WTC11 (cell line): ENCODE measurements at regions of chr4 and their contacts with region 1.

Region 1: DNA sequence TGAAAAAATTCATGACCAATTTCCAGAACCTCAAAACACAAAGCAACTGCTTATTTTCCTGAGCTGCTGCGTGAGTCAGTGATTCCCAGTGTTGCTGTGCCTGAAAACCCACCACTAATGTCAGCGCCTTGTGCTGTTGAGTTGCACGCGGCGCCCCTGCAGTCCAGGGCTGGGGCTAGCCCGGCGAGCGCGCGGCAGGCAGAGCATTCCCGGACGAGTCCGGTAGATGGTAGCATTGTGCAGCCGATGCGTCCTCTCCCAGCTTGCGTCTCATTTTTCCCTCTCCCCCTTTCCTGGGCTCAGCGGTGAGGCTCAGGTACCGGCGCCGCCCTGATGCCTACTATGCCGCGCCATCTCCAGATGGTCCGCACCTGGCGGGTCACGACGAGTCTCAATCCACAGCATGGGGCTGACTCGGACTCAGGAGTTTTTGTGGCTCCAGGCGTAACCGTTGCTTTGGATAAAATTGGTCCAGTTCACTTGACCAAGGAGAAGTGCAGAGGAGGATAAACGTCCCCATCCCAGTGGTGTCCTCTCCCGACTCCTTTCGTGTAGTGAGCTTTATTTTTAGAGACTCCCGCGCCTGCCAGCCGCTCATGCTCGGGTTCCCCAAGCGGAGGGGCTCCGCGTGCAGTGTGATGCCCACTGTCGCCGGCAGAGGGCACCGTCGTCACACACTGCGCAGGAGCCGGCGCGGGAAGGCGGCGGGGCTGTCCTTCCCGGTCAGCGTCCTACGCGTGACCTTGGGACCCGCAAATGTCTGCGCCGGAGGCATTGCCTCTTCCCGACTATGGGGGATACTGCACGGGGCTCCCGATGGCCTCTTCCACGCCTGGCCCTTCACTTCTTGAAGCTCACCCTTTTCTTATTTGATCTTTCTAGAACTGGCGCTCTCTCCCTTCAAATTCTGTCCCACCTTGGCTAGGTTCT is 53.6 kb upstream of the IGFBP7 start:
- DNase-seq: peak; percentile 88
- ATAC-seq: peak; percentile 90
- H3K4me3 Mint-ChIP-seq: peak overlapping the region; percentile 75
- H3K27ac Mint-ChIP-seq: no peak overlapping the region
- H3K4me1 Mint-ChIP-seq: peaks cover 29% of the 10 kb centered on the region
- H3K27me3 Mint-ChIP-seq: peaks cover 33% of the 10 kb centered on the region
- CTCF ChIP-seq: peak; percentile 90

Region 2: DNA sequence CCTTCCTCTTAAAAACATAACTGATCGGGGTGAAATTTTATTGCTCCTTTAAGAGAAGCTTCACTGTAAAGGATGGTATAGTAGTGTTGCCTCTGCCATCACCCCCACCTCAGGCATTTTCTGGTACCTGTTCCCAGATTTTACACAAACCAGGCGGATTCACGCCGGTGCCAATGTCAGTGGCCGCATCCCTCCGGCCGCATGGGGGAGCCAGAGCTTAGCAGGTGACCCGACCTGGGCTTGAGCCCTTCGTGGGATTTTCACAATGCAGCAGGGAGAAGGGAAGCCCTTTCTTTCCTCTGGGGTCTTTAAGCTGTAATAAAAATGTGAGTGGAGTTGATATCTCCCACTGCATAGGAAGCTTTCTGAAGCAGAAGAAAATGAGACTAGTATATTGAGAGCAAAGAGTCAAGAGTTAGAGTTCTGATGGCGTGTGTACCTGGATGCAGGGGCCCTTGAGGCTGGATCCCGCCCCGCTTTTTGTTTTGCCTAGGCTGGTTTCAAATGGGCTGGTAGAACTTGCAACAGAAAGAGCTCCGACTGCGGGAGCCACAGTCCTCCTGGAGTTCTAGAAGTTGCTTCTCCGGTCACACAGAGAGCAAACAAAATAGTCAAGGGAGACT is 125.7 kb before region 1 on chr4:
- CTCF ChIA-PET with region 1: interaction called, 40 read pairs
- POLR2A ChIA-PET with region 1: interaction called, 5 read pairs
- DNase-seq: peak; percentile 85
- ATAC-seq: peak; percentile 92
- H3K4me3 Mint-ChIP-seq: peak overlapping the region; percentile 52
- H3K27ac Mint-ChIP-seq: no peak overlapping the region
- H3K4me1 Mint-ChIP-seq: peaks cover 13% of the 10 kb centered on the region
- H3K27me3 Mint-ChIP-seq: no peaks in the 10 kb centered on the region; the same call in 1 of the 2 replicates
- CTCF ChIP-seq: peak; percentile 70; the same call in 1 of the 2 replicates

Region 3: GRCh38 chr4:57131849-57132742 is 31.7 kb before region 1 on chr4:
- CTCF ChIA-PET with region 1: interaction called, 10 read pairs
- POLR2A ChIA-PET with region 1: no interaction called
- DNase-seq: peak; percentile 24
- ATAC-seq: peak; percentile 92
- H3K4me3 Mint-ChIP-seq: no peak overlapping the region
- H3K27ac Mint-ChIP-seq: peak overlapping the region; percentile 25
- H3K4me1 Mint-ChIP-seq: peaks cover 15% of the 10 kb centered on the region
- H3K27me3 Mint-ChIP-seq: peaks cover 4% of the 10 kb centered on the region; the same call in 1 of the 2 replicates
- CTCF ChIP-seq: no peak

Region 4: DNA sequence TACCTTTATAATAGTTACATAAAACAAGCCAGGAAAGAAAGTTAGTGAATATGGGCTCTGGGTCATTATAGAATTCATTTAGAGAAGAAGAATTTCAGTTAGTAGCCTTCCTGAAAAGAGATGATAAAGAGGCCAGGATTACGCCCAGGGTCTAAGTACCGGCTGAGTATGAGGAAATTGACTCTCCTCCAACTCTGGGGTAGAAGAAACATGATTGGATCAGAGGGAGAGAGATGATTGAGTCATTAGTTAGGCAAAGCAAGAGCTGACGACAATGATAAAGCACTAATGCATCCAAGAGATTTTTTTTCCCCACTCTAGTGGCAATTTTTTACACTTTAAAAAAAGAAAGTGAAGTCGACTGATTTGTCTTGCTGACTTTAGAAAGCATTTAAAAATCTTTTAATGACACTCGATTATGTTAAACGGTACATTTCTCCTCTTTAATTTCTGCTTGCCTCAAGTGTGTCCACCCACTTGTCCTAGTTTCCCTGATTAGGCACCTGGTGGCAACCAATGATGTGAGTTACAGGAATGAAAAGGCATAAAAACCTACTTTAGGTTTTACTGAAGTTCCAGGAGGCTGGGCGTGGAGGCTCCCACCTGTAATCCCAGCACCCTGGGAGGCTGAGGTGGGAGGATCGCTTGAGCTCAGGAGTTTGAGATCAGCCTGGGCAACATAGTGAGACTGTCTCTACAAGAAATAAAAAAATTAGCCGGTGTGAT is 16.3 kb before region 1 on chr4:
- CTCF ChIA-PET with region 1: no interaction called
- POLR2A ChIA-PET with region 1: no interaction called
- DNase-seq: no peak
- ATAC-seq: no peak
- H3K4me3 Mint-ChIP-seq: no peak overlapping the region
- H3K27ac Mint-ChIP-seq: no peak overlapping the region
- H3K4me1 Mint-ChIP-seq: no peaks in the 10 kb centered on the region
- H3K27me3 Mint-ChIP-seq: peaks cover 10% of the 10 kb centered on the region; the same call in 1 of the 2 replicates
- CTCF ChIP-seq: no peak

Region 5: DNA sequence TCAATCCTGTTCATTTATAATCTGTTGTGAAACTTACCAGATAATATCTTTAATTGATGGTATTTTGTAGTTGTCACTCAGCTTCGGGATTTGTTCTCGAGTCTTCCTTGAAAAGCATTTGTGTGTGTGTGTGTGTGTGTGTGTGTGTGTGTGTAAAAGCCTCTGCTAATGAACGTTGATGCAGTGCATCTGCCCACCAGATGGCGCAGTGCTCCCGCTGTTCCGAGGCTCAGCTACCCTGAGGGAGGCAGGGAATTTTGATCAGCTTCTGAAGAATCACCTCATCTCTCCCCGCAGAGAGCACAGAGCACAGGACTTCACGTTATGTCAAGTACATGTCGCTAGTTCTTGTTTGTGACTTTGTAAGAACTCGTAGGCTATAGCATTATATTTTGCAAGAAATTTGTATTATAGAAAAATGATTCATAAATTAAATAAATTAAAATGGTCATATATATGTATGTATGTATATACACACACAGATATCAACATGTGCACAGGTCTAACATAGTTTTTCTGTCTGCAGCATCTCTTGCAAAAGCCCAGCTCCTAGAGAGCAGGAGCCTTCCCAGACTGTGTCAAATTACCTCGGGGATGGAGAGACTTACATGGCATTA is 263.1 kb after region 1 on chr4:
- CTCF ChIA-PET with region 1: interaction called, 35 read pairs
- POLR2A ChIA-PET with region 1: no interaction called
- DNase-seq: peak; percentile 81
- ATAC-seq: peak; percentile 94
- H3K4me3 Mint-ChIP-seq: no peak overlapping the region
- H3K27ac Mint-ChIP-seq: no peak overlapping the region
- H3K4me1 Mint-ChIP-seq: peaks cover 4% of the 10 kb centered on the region; the same call in 1 of the 2 replicates
- H3K27me3 Mint-ChIP-seq: peaks cover 4% of the 10 kb centered on the region; the same call in 1 of the 2 replicates
- CTCF ChIP-seq: no peak; the same call in 1 of the 2 replicates

Region 6: GRCh38 chr4:57435300-57435699 is 271.5 kb after region 1 on chr4:
- CTCF ChIA-PET with region 1: interaction called, 24 read pairs
- POLR2A ChIA-PET with region 1: no interaction called
- DNase-seq: no peak
- ATAC-seq: no peak
- H3K4me3 Mint-ChIP-seq: no peak overlapping the region
- H3K27ac Mint-ChIP-seq: no peak overlapping the region
- H3K4me1 Mint-ChIP-seq: no peaks in the 10 kb centered on the region
- H3K27me3 Mint-ChIP-seq: no peaks in the 10 kb centered on the region
- CTCF ChIP-seq: no peak

Region 7: DNA sequence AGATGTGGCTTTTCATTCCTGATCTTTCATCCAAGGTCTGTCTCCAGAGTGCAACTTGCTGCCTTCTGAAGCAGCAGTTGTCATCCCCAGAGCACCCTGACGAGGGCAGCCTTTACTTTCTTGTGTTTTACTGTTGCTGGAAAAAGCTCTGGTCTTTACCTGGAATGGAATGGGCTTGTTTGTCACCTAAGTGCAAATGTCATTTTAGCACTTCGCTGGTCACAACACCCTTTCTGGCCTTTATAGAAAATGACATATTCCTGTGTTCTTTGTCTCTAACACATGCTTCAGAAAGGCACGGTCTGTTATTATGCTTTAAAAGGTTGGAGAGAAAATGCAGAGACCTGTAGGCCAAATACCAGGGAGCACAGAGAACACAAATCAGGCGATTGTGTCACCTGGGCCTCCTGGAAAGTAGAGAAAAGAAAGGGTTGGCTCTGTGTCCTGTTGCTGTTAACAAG is 279.1 kb after region 1 on chr4:
- CTCF ChIA-PET with region 1: interaction called, 24 read pairs
- POLR2A ChIA-PET with region 1: no interaction called
- DNase-seq: peak; percentile 76
- ATAC-seq: peak; percentile 90
- H3K4me3 Mint-ChIP-seq: no peak overlapping the region
- H3K27ac Mint-ChIP-seq: no peak overlapping the region
- H3K4me1 Mint-ChIP-seq: peaks cover 2% of the 10 kb centered on the region; the same call in 1 of the 2 replicates
- H3K27me3 Mint-ChIP-seq: no peaks in the 10 kb centered on the region
- CTCF ChIP-seq: peak; percentile 43; the same call in 1 of the 2 replicates